PC-9 (cell line): ENCODE measurements at regions of chr3 and their contacts with region 1.

Region 1: GRCh38 chr3:174862143-174862542 is 3.0 kb downstream of the NAALADL2 start:
- DNase-seq: peak; percentile 68 to 82
- H3K4me3 ChIP-seq: no peak overlapping the region
- H3K27ac ChIP-seq: no peak overlapping the region
- H3K4me1 ChIP-seq: peaks cover 60% of the 10 kb centered on the region
- H3K27me3 ChIP-seq: no peaks in the 10 kb centered on the region
- CTCF ChIP-seq: peak; percentile 61

Region 2: GRCh38 chr3:174440741-174441587 is 421.2 kb before region 1 on chr3:
- CTCF ChIA-PET with region 1: interaction called, 3 read pairs
- POLR2A ChIA-PET with region 1: no interaction called
- intact Hi-C with region 1: loop called (anchors 2 kb)
- DNase-seq: peak; percentile 82 to 88
- H3K4me3 ChIP-seq: peak overlapping the region; percentile 74
- H3K27ac ChIP-seq: peak overlapping the region; percentile 79
- H3K4me1 ChIP-seq: peaks cover 33% of the 10 kb centered on the region
- H3K27me3 ChIP-seq: no peaks in the 10 kb centered on the region
- CTCF ChIP-seq: 0 out of 2 replicates have a peak, but pooled peaks have one; percentile 4

Region 3: GRCh38 chr3:174973468-174973867 is 111.3 kb after region 1 on chr3:
- CTCF ChIA-PET with region 1: no interaction called
- POLR2A ChIA-PET with region 1: interaction called, 7 read pairs
- intact Hi-C with region 1: loop called (anchors 1 kb)
- DNase-seq: peak; percentile 41 to 67
- H3K4me3 ChIP-seq: no peak overlapping the region
- H3K27ac ChIP-seq: no peak overlapping the region
- H3K4me1 ChIP-seq: peaks cover 7% of the 10 kb centered on the region; the same call in 1 of the 2 replicates
- H3K27me3 ChIP-seq: no peaks in the 10 kb centered on the region
- CTCF ChIP-seq: no peak

Region 4: DNA sequence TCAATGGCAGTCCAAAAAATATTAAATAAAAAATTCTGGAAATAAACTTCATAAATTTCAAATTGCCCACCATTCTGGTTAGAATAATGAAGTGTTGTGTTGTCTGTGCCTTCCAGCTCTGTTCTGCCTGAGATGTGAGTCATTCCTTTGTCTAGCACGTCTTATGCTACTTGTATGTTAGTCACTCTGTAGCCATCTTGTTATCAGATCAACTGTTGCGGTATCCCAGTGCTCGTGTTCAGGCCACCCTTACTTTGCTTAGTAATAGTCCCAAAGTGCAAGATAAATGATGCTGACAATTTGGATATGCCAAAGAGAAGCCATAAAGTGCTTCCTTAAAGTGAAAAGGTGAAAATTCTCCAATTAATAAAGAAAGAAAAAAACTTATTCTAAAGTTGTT is 524.5 kb after region 1 on chr3:
- CTCF ChIA-PET with region 1: no interaction called
- POLR2A ChIA-PET with region 1: no interaction called
- intact Hi-C with region 1: loop called (anchors 1 kb)
- DNase-seq: peak; percentile 37 to 70
- H3K4me3 ChIP-seq: no peak overlapping the region
- H3K27ac ChIP-seq: no peak overlapping the region
- H3K4me1 ChIP-seq: no peaks in the 10 kb centered on the region; the same call in 1 of the 2 replicates
- H3K27me3 ChIP-seq: no peaks in the 10 kb centered on the region
- CTCF ChIP-seq: no peak

Region 5: GRCh38 chr3:176167245-176167644 is 1305.1 kb after region 1 on chr3:
- CTCF ChIA-PET with region 1: no interaction called
- POLR2A ChIA-PET with region 1: no interaction called
- intact Hi-C with region 1: loop called (anchors 5 kb)
- DNase-seq: peak; percentile 50 to 99
- H3K4me3 ChIP-seq: no peak overlapping the region
- H3K27ac ChIP-seq: peak overlapping the region; percentile 30
- H3K4me1 ChIP-seq: peaks cover 20% of the 10 kb centered on the region
- H3K27me3 ChIP-seq: no peaks in the 10 kb centered on the region
- CTCF ChIP-seq: no peak